CD14-positive monocyte (primary cell): ENCODE measurements at regions of chr19 and their contacts with region 1.

Region 1: GRCh38 chr19:4342615-4343369 is 570 bp upstream of the MPND start:
- DNase-seq: peak; percentile 99 to 100 (median 100)
- H3K4me3 ChIP-seq: peak overlapping the region; percentile 52 to 84 (median 70)
- H3K4me3 Mint-ChIP-seq: peak overlapping the region; percentile 91 to 93
- H3K27ac ChIP-seq: peak overlapping the region; percentile 78 to 85
- H3K27ac Mint-ChIP-seq: peak overlapping the region; percentile 91 to 98 (median 95)
- H3K4me1 ChIP-seq: peaks cover 27 to 37% of the 10 kb centered on the region in 2 donors
- H3K4me1 Mint-ChIP-seq: peaks cover 35% of the 10 kb centered on the region
- H3K27me3 ChIP-seq: no peaks in the 10 kb centered on the region
- H3K27me3 Mint-ChIP-seq: peaks cover 0 to 13% (median 11%) of the 10 kb centered on the region in 3 donors
- CTCF ChIP-seq: peak; percentile 17

Region 2: DNA sequence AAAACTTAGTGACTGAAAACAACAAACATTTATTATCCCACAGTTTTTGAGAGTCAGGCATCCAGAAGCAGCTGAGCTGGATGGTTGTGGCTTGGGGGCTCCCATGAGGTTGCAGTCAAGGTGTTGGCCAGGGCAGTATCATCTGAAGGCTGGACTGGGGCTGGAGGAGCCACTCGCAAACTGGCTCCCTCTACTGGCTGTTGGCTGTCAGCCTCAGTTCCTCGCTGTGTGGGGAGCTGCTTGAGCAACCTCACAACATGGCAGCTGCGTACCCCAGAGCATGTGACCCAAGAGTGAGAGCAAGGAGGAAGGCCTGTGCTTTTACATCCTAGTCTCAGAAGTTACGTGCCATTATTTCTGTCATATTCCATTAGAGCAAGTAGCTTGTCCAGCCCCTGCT is 86.2 kb before region 1 on chr19:
- intact Hi-C with region 1: no loop called
- DNase-seq: no peak
- H3K4me3 ChIP-seq: no peak overlapping the region
- H3K4me3 Mint-ChIP-seq: no peak overlapping the region
- H3K27ac ChIP-seq: no peak overlapping the region
- H3K27ac Mint-ChIP-seq: peak overlapping the region in 1 of 7 donors; percentile 63
- H3K4me1 ChIP-seq: peaks cover 5 to 7% of the 10 kb centered on the region in 2 donors
- H3K4me1 Mint-ChIP-seq: peaks cover 6% of the 10 kb centered on the region
- H3K27me3 ChIP-seq: no peaks in the 10 kb centered on the region
- H3K27me3 Mint-ChIP-seq: peaks cover 0 to 1% (median 0%) of the 10 kb centered on the region in 3 donors
- CTCF ChIP-seq: no peak

Region 3: GRCh38 chr19:4471403-4472173 is 128.8 kb after region 1 on chr19:
- intact Hi-C with region 1: loop called in 1 of 2 experiments (anchors 2 kb)
- DNase-seq: peak; percentile 99 to 100 (median 100)
- H3K4me3 ChIP-seq: peak overlapping the region; percentile 74 to 94 (median 83)
- H3K4me3 Mint-ChIP-seq: no peak overlapping the region
- H3K27ac ChIP-seq: peak overlapping the region; percentile 74 to 87
- H3K27ac Mint-ChIP-seq: no peak overlapping the region
- H3K4me1 ChIP-seq: peaks cover 30 to 35% of the 10 kb centered on the region in 2 donors
- H3K4me1 Mint-ChIP-seq: peaks cover 24% of the 10 kb centered on the region
- H3K27me3 ChIP-seq: no peaks in the 10 kb centered on the region
- H3K27me3 Mint-ChIP-seq: peaks cover 0 to 1% (median 0%) of the 10 kb centered on the region in 3 donors
- CTCF ChIP-seq: no peak